AG04449 (cell line): ENCODE measurements at regions of chr1 and their contacts with region 1.

Region 1: GRCh38 chr1:155193275-155193990 is 14.3 kb downstream of the THBS3 start:
- DNase-seq: no peak
- H3K4me3 ChIP-seq: peak overlapping the region; percentile 66
- CTCF ChIP-seq: peak; percentile 99

Region 2: GRCh38 chr1:155012776-155013602 is 180.4 kb before region 1 on chr1:
- CTCF ChIA-PET with region 1: no interaction called
- POLR2A ChIA-PET with region 1: no interaction called
- DNase-seq: no peak
- H3K4me3 ChIP-seq: no peak overlapping the region
- CTCF ChIP-seq: no peak

Region 3: DNA sequence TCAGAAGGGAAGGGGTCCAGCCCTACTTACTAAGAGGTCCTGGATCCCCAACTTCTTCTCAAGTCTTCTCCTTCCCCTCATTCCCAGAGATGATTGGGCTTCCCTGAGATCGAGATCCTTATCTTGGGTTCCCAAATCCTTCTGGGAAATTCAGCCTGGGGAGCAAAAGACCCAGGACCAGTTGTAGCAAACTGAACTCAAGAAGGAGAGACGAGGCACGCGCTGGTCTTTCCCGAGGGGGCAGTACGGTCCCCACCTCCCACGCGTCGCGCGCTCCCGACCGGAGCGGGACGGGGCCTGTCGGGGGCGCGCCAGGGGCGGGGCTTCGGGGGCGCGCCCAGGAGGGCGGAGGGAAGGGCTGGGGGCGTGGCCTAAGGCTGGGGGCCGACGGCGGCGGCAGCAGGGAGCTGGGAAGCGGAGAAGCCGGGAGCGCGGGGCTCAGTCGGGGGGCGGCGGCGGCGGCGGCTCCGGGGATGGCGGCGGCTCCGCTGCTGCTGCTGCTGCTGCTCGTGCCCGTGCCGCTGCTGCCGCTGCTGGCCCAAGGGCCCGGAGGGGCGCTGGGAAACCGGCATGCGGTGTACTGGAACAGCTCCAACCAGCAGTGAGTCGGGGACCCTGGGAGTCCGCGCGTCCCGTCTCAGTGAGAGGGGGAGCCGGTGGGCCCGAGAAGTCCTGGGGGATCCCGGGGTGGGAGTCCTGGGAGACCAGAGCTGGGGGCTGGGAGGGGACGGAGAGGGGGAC is 114.8 kb before region 1 on chr1 and contains the start of gene EFNA3:
- CTCF ChIA-PET with region 1: no interaction called
- POLR2A ChIA-PET with region 1: no interaction called
- DNase-seq: no peak
- H3K4me3 ChIP-seq: peak within 1 kb of the TSS; percentile 51
- CTCF ChIP-seq: no peak

Region 4: DNA sequence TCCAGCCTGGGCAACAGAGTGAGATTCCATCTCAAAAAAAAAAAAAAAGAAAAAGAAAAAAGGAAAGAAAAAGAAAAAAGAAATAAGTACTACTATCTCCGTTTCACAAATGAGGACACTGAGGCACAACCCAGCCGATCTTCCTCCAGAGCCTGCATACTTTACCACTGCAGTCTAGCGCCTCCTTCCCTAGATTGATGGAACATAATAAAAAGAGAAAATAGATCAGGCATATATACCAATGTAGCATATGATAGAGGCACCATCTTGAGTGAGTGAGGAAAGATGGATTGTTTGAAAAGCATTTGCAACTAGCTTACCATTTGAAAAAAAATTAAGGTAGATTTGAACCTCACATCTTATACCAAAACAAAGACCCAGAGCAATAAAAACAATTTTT is 47.9 kb before region 1 on chr1:
- CTCF ChIA-PET with region 1: no interaction called
- POLR2A ChIA-PET with region 1: no interaction called
- DNase-seq: no peak
- H3K4me3 ChIP-seq: no peak overlapping the region
- CTCF ChIP-seq: no peak

Region 5: DNA sequence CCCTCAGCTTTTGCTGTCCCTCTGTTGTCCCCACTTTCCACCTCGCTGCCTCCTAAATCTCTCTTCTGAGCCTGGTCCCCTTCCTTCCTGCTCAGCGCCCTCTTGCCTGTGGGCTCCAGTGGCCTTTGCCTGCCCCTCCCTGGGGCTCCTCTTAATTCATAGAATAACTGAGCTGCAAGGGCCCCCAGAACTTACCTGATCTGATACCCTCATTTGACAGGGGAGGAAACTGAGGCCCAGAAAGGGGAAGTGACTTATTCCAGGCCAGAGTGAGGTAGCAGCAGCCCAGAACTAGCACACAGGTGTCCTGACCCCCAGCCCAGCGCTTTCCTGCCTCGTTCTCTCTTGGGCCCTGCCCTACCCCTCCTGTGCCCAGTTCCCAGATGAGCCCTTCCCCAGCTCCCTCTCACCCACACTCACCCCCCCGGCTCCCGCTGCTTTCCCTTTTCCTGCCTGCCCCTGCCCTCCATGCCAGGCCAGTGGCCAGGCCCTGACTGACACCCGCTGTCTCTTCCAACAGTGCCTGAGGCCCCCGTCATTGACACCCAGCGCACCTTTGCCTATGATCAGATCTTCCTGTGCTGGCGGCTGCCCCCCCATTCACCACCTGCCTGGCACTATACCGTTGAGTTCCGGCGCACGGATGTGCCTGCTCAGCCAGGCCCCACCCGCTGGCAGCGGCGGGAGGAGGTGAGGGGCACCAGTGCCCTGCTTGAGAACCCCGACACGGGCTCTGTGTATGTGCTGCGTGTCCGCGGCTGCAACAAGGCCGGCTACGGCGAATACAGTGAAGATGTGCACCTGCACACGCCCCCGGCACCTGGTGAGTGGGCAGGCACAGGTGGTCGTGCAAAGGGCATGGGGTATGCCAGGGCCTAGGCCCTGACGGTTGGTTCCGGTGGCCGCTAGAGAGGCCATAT is 14.1 kb before region 1 on chr1:
- CTCF ChIA-PET with region 1: interaction called, 123 read pairs
- POLR2A ChIA-PET with region 1: interaction called, 13 read pairs
- DNase-seq: no peak
- H3K4me3 ChIP-seq: no peak overlapping the region
- CTCF ChIP-seq: no peak

Region 6: GRCh38 chr1:155218854-155219591 is 25.6 kb after region 1 on chr1:
- CTCF ChIA-PET with region 1: interaction called, 11 read pairs
- POLR2A ChIA-PET with region 1: no interaction called
- DNase-seq: no peak
- H3K4me3 ChIP-seq: no peak overlapping the region
- CTCF ChIP-seq: no peak

Region 7: GRCh38 chr1:155227261-155228095 is 34.0 kb after region 1 on chr1:
- CTCF ChIA-PET with region 1: interaction called, 11 read pairs
- POLR2A ChIA-PET with region 1: interaction called, 8 read pairs
- DNase-seq: peak; percentile 94
- H3K4me3 ChIP-seq: peak overlapping the region; percentile 77
- CTCF ChIP-seq: no peak

Region 8: DNA sequence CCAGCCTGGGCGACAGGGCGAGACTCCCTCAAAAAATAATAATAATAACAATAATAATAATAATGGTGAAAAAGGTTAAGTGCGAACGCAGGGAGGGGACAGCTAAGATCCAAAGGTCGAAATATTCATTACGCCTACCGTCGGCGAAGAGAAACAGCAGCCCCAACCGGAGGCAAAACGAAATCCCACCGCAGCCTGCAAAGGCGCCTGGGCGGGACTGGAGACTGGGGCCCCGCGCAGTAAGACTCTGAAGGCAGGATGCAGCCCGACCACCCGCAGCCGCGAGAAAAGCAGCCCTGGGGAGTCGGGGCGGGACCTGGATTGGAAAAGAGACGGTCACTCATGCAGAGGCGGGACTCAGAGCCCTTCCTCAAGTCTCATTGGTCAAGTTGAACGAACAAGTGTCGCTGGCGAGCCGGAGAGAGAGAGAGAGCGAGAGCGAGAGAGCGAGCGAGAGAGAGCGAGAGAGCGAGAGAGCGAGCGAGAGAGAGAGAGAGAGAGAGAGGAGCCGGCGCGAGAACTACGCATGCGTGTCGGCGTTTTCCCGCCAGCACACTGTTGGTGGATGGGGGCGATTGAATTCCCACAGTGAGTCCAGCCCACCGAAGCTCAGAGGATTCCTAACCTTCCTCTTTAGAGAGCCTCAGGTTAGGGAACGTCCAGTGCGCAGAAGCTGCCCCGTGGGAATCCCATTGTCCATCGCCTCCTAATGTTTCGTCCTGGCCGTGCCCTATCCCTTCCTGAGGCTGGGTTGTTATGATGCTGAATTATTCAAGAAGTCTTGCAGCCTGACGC is 51.1 kb after region 1 on chr1:
- CTCF ChIA-PET with region 1: interaction called, 17 read pairs
- POLR2A ChIA-PET with region 1: interaction called, 3 read pairs
- DNase-seq: peak; percentile 99
- H3K4me3 ChIP-seq: peak overlapping the region; percentile 67
- CTCF ChIP-seq: peak; percentile 23